ENCODE measurements at regions of chr4 and their contacts with region 1.

Region 1: DNA sequence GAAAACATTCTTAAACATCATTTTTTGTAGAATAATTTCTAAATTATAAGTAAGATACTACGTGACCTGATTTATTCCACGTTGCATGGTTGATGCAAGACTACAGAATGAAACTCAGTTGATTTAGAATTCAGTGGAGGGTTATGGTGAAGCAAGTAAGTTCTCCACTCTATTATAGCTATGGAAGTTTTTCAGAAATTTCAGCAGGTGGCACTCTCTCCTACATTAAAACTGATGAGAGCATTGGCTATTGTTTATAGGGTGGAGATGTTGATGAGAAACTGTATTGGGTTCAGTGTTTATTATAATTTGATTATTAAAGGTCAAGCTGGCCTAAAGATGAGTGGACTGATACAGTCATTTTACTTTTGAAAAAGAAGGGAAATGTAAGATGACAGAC is 88.0 kb downstream of the FNIP2 start:
- DNase-seq: peak in 1 of 2 experiments; percentile 28
- H3K4me3 ChIP-seq: no peak overlapping the region
- H3K4me3 Mint-ChIP-seq: no peak overlapping the region
- H3K27ac Mint-ChIP-seq: no peak overlapping the region
- H3K4me1 ChIP-seq: peaks cover 39% of the 10 kb centered on the region
- H3K4me1 Mint-ChIP-seq: peaks cover 30% of the 10 kb centered on the region
- H3K27me3 ChIP-seq: no peaks in the 10 kb centered on the region
- H3K27me3 Mint-ChIP-seq: no peaks in the 10 kb centered on the region
- CTCF ChIP-seq: peak; percentile 32 to 39

Region 2: GRCh38 chr4:158644760-158645159 is 212.1 kb before region 1 on chr4:
- CTCF ChIA-PET with region 1: no interaction called
- POLR2A ChIA-PET with region 1: no interaction called
- intact Hi-C with region 1: no loop called
- DNase-seq: no peak
- H3K4me3 ChIP-seq: no peak overlapping the region
- H3K4me3 Mint-ChIP-seq: no peak overlapping the region
- H3K27ac Mint-ChIP-seq: no peak overlapping the region
- H3K4me1 ChIP-seq: no peaks in the 10 kb centered on the region
- H3K4me1 Mint-ChIP-seq: no peaks in the 10 kb centered on the region
- H3K27me3 ChIP-seq: no peaks in the 10 kb centered on the region
- H3K27me3 Mint-ChIP-seq: peaks cover 2% of the 10 kb centered on the region
- CTCF ChIP-seq: no peak

Region 3: GRCh38 chr4:158869001-158869400 is 12.1 kb after region 1 on chr4:
- CTCF ChIA-PET with region 1: no interaction called
- POLR2A ChIA-PET with region 1: no interaction called
- intact Hi-C with region 1: no loop called
- DNase-seq: no peak
- H3K4me3 ChIP-seq: no peak overlapping the region
- H3K4me3 Mint-ChIP-seq: no peak overlapping the region
- H3K27ac Mint-ChIP-seq: no peak overlapping the region
- H3K4me1 ChIP-seq: peaks cover 9% of the 10 kb centered on the region
- H3K4me1 Mint-ChIP-seq: peaks cover 15% of the 10 kb centered on the region
- H3K27me3 ChIP-seq: no peaks in the 10 kb centered on the region
- H3K27me3 Mint-ChIP-seq: no peaks in the 10 kb centered on the region
- CTCF ChIP-seq: no peak

Region 4: GRCh38 chr4:158884280-158884679 is 27.4 kb after region 1 on chr4:
- CTCF ChIA-PET with region 1: no interaction called
- POLR2A ChIA-PET with region 1: no interaction called
- intact Hi-C with region 1: loop called (anchors 1 kb)
- DNase-seq: no peak
- H3K4me3 ChIP-seq: no peak overlapping the region
- H3K4me3 Mint-ChIP-seq: no peak overlapping the region
- H3K27ac Mint-ChIP-seq: peak overlapping the region; percentile 11
- H3K4me1 ChIP-seq: peaks cover 26% of the 10 kb centered on the region
- H3K4me1 Mint-ChIP-seq: peaks cover 13% of the 10 kb centered on the region
- H3K27me3 ChIP-seq: no peaks in the 10 kb centered on the region
- H3K27me3 Mint-ChIP-seq: no peaks in the 10 kb centered on the region
- CTCF ChIP-seq: no peak

Region 5: DNA sequence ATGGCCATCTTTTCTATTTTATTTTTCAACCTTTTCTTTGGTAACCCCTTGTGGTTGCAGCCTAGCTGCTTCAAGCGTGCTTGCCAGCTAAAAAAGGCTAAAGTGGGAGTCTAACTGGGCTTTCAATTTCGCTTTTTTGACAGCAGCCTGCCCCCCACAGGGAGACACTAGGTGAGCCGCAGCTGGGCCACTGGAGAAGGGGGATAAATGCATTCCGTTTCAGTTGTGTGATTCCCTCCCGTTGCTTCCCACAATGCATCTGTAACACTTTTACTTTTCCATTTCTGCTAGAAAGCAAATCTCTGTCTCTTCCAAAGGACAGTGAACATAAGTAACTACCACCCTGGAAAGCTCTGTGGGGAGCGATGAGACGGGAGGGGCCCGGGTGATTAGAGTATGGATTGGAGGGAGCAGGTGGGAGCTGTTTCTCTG is 159.8 kb after region 1 on chr4:
- CTCF ChIA-PET with region 1: interaction called, 7 read pairs
- POLR2A ChIA-PET with region 1: no interaction called
- intact Hi-C with region 1: loop called (anchors 1 kb)
- DNase-seq: peak in 1 of 2 experiments; percentile 30
- H3K4me3 ChIP-seq: no peak overlapping the region
- H3K4me3 Mint-ChIP-seq: no peak overlapping the region
- H3K27ac Mint-ChIP-seq: no peak overlapping the region
- H3K4me1 ChIP-seq: no peaks in the 10 kb centered on the region; the same call in 1 of the 2 replicates
- H3K4me1 Mint-ChIP-seq: no peaks in the 10 kb centered on the region
- H3K27me3 ChIP-seq: no peaks in the 10 kb centered on the region
- H3K27me3 Mint-ChIP-seq: no peaks in the 10 kb centered on the region
- CTCF ChIP-seq: peak in 1 of 2 experiments; percentile 24

Region 6: DNA sequence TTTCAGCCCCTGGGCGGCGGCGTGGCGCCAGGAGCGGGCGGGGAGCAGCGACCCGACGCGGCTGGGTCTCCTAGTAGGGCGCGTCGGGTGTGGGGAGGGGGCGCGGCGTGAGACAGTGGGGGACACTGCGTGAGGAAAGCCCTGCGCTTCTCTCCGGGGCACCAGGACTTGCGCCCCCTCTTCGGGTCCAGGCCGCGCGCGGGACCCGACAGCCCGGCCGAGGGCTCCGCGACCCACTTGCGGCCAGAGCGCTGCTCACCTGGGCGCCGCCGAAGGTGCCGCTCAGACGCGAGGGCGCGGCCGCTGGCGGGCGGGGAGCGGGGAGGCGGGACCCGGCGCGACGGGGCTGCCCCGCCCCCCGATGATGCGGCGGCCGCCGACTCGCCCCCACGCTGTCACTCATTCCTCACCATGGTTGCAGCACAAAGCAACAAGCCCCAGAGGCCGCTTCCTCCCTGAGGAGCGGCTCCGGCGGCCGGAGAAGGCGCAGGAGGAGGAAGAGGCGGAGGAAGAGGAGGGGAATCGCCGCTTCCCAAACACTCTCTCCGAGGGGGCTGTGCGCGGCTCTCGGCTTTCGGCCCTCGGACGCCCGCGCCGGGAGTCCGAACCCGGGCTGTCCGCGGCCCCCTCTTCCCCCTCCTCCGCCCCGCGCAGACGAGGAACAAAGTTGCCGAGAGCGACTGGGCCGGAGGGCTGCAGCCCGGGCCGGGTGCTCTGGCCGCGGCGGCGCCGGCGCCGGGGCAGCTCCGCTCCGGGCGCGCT is 246.0 kb after region 1 on chr4 and contains the start of gene RAPGEF2:
- CTCF ChIA-PET with region 1: no interaction called
- POLR2A ChIA-PET with region 1: no interaction called
- intact Hi-C with region 1: loop called (anchors 1 kb)
- DNase-seq: peak; percentile 93 to 94
- H3K4me3 ChIP-seq: peak within 1 kb of the TSS; percentile 94
- H3K4me3 Mint-ChIP-seq: peak within 1 kb of the TSS; percentile 99
- H3K27ac Mint-ChIP-seq: peak within 1 kb of the TSS; percentile 97
- H3K4me1 ChIP-seq: peaks cover 27% of the 10 kb centered on the region
- H3K4me1 Mint-ChIP-seq: peaks cover 35% of the 10 kb centered on the region
- H3K27me3 ChIP-seq: no peaks in the 10 kb centered on the region
- H3K27me3 Mint-ChIP-seq: no peaks in the 10 kb centered on the region
- CTCF ChIP-seq: peak in 1 of 2 experiments; percentile 37
- total RNA-seq, gene RAPGEF2: 65.6 and 67.6 TPM in 2 replicates

Region 7: GRCh38 chr4:159206427-159206871 is 349.6 kb after region 1 on chr4:
- CTCF ChIA-PET with region 1: interaction called, 7 read pairs
- POLR2A ChIA-PET with region 1: no interaction called
- intact Hi-C with region 1: loop called (anchors 1 kb)
- DNase-seq: no peak
- H3K4me3 ChIP-seq: no peak overlapping the region
- H3K4me3 Mint-ChIP-seq: no peak overlapping the region
- H3K27ac Mint-ChIP-seq: no peak overlapping the region
- H3K4me1 ChIP-seq: no peaks in the 10 kb centered on the region; the same call in 1 of the 2 replicates
- H3K4me1 Mint-ChIP-seq: peaks cover 28% of the 10 kb centered on the region
- H3K27me3 ChIP-seq: no peaks in the 10 kb centered on the region
- H3K27me3 Mint-ChIP-seq: no peaks in the 10 kb centered on the region
- CTCF ChIP-seq: no peak

Region 8: DNA sequence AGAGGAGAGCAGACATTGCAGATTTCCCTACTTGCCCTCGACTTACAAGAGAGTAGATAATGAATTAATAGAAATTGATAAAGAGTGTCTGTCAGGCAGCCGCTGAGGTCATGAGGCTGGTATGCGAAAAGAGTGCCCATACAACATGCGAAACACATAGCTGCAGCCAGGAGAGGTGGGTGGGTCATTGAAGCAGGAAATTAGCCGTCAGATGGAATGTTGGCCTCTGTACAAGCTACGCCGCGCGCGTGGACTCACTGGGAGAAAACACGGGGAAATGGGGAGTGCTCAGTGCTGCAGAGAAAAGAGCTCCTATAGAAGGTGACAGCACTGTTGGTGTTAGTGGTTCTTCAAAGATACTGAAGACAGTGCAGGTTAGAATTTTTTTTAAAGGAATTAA is 371.1 kb after region 1 on chr4:
- CTCF ChIA-PET with region 1: no interaction called
- POLR2A ChIA-PET with region 1: no interaction called
- intact Hi-C with region 1: loop called (anchors 1 kb)
- DNase-seq: peak; percentile 76 to 86
- H3K4me3 ChIP-seq: peak overlapping the region; percentile 8; the same call in 1 of the 2 replicates
- H3K4me3 Mint-ChIP-seq: peak overlapping the region; percentile 82
- H3K27ac Mint-ChIP-seq: peak overlapping the region; percentile 97
- H3K4me1 ChIP-seq: peaks cover 48% of the 10 kb centered on the region
- H3K4me1 Mint-ChIP-seq: peaks cover 28% of the 10 kb centered on the region
- H3K27me3 ChIP-seq: no peaks in the 10 kb centered on the region
- H3K27me3 Mint-ChIP-seq: no peaks in the 10 kb centered on the region
- CTCF ChIP-seq: no peak

Region 9: GRCh38 chr4:159308566-159309340 is 451.9 kb after region 1 on chr4:
- CTCF ChIA-PET with region 1: no interaction called
- POLR2A ChIA-PET with region 1: no interaction called
- intact Hi-C with region 1: loop called (anchors 10 kb)
- DNase-seq: no peak
- H3K4me3 ChIP-seq: no peak overlapping the region
- H3K4me3 Mint-ChIP-seq: no peak overlapping the region
- H3K27ac Mint-ChIP-seq: no peak overlapping the region
- H3K4me1 ChIP-seq: no peaks in the 10 kb centered on the region
- H3K4me1 Mint-ChIP-seq: peaks cover 7% of the 10 kb centered on the region
- H3K27me3 ChIP-seq: no peaks in the 10 kb centered on the region
- H3K27me3 Mint-ChIP-seq: no peaks in the 10 kb centered on the region
- CTCF ChIP-seq: no peak

Measured in Caco-2 (cell line).